CD4-positive, alpha-beta memory T cell (primary cell): ENCODE measurements at regions of chr1 and their contacts with region 1.

Region 1: DNA sequence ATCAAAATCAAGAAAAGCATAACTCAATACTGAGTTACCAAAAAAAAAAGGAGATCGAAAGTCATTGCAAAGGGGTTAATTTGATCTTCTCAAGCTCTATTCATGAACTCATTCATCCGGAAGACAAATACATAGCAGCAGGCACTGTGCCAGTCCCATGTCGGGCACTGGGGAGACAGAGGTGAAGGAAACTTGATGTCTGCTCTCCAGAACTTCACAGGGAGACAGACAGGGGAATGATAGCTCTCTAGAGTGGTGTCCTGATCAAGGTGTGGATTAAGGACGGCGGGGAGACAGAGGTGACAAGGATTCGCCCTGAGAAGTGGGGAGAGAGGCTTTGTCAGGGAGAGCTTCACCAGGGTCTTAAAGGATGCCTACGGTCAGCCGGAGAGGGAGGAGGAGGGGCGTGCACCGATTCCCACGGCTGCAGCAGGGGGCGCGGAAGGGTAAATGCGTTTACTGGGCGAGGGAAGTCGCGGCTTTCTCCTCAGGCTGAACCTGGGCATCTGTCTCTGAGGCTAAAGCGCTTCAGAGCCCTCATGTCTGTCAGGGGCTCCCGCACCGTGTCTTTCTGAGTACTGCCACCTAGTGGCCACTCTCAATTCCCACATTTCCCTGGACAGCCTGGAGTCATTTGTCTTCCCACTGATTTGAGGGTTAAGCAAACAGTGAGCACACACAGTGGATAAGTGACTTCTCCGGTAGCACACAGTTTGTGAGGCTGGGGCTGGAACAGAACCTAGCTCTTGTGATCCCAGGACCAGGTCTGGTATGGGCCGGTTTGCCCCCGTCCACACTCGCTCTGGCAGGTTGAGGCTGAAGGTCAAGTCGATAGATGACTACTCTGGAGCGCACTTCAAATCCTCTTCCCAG is 152.8 kb downstream of the TENT5C start:
- DNase-seq: peak; percentile 57 to 65 (median 63)
- H3K4me3 ChIP-seq: peak overlapping the region; percentile 3 to 42
- H3K4me3 Mint-ChIP-seq: peak overlapping the region; percentile 74 to 94 (median 87)
- H3K27ac ChIP-seq: no peak overlapping the region
- H3K27ac Mint-ChIP-seq: peak overlapping the region in 5 of 7 donors; percentile 5 to 85 (median 45)
- H3K4me1 ChIP-seq: peaks cover 8% of the 10 kb centered on the region
- H3K4me1 Mint-ChIP-seq: peaks cover 4 to 10% (median 7%) of the 10 kb centered on the region in 4 donors
- H3K27me3 ChIP-seq: peaks cover 5% of the 10 kb centered on the region
- H3K27me3 Mint-ChIP-seq: peaks cover 8 to 10% of the 10 kb centered on the region in 2 donors

Region 2: GRCh38 chr1:117312225-117313138 is 446.2 kb before region 1 on chr1:
- CTCF ChIA-PET with region 1: interaction called, 5 read pairs
- POLR2A ChIA-PET with region 1: no interaction called
- intact Hi-C with region 1: loop called (anchors 1 kb)
- DNase-seq: peak in 4 of 5 donors; percentile 23 to 38 (median 25)
- H3K4me3 ChIP-seq: no peak overlapping the region
- H3K4me3 Mint-ChIP-seq: no peak overlapping the region
- H3K27ac ChIP-seq: no peak overlapping the region
- H3K27ac Mint-ChIP-seq: no peak overlapping the region
- H3K4me1 ChIP-seq: no peaks in the 10 kb centered on the region
- H3K4me1 Mint-ChIP-seq: peaks cover 0 to 2% (median under 1%) of the 10 kb centered on the region in 4 donors
- H3K27me3 ChIP-seq: no peaks in the 10 kb centered on the region
- H3K27me3 Mint-ChIP-seq: peaks cover 0 to 4% of the 10 kb centered on the region in 2 donors

Region 3: GRCh38 chr1:117512743-117513321 is 245.8 kb before region 1 on chr1:
- CTCF ChIA-PET with region 1: interaction called, 179 read pairs
- POLR2A ChIA-PET with region 1: no interaction called
- intact Hi-C with region 1: loop called (anchors 1 kb)
- DNase-seq: peak in 4 of 5 donors; percentile 23 to 35 (median 28)
- H3K4me3 ChIP-seq: no peak overlapping the region
- H3K4me3 Mint-ChIP-seq: no peak overlapping the region
- H3K27ac ChIP-seq: no peak overlapping the region
- H3K27ac Mint-ChIP-seq: no peak overlapping the region
- H3K4me1 ChIP-seq: no peaks in the 10 kb centered on the region
- H3K4me1 Mint-ChIP-seq: peaks cover 0 to 1% (median 0%) of the 10 kb centered on the region in 4 donors
- H3K27me3 ChIP-seq: no peaks in the 10 kb centered on the region
- H3K27me3 Mint-ChIP-seq: no peaks in the 10 kb centered on the region

Region 4: GRCh38 chr1:117605774-117606648 is 152.7 kb before region 1 on chr1 and contains the start of gene TENT5C:
- CTCF ChIA-PET with region 1: interaction called, 31 read pairs
- POLR2A ChIA-PET with region 1: interaction called, 5 read pairs
- intact Hi-C with region 1: loop called (anchors 2 kb)
- DNase-seq: peak; percentile 99 to 100 (median 99)
- H3K4me3 ChIP-seq: peak within 1 kb of the TSS; percentile 93 to 98
- H3K4me3 Mint-ChIP-seq: peak within 1 kb of the TSS; percentile 91 to 100 (median 98)
- H3K27ac ChIP-seq: peak within 1 kb of the TSS; percentile 92
- H3K27ac Mint-ChIP-seq: peak within 1 kb of the TSS; percentile 94 to 100 (median 99)
- H3K4me1 ChIP-seq: peaks cover 43% of the 10 kb centered on the region
- H3K4me1 Mint-ChIP-seq: peaks cover 28 to 59% (median 37%) of the 10 kb centered on the region in 4 donors
- H3K27me3 ChIP-seq: no peaks in the 10 kb centered on the region
- H3K27me3 Mint-ChIP-seq: no peaks in the 10 kb centered on the region
- total RNA-seq, gene TENT5C: 13.9 to 14.8 TPM

Region 5: DNA sequence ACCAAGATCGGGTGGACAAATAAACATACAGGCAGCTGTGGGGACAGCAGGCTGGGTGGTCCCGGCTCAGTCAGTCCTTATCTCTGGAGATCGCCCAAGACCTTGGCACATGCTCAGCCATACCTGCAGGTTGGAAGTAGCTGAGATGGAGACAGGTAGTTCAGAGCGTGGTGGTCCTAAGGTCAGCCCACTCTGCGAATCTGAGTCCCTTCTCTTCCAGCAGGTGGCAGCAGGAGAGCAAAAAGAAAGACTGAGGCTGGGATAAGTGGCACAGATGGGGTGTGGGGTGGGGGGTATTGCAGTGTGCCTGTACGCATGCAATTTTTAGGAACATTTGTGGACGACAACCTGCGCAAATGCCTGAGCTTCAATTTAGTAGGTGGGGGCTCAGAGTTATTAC is 48.0 kb before region 1 on chr1:
- CTCF ChIA-PET with region 1: interaction called, 53 read pairs
- POLR2A ChIA-PET with region 1: no interaction called
- intact Hi-C with region 1: no loop called
- DNase-seq: no peak
- H3K4me3 ChIP-seq: no peak overlapping the region
- H3K4me3 Mint-ChIP-seq: no peak overlapping the region
- H3K27ac ChIP-seq: no peak overlapping the region
- H3K27ac Mint-ChIP-seq: no peak overlapping the region
- H3K4me1 ChIP-seq: no peaks in the 10 kb centered on the region
- H3K4me1 Mint-ChIP-seq: no peaks in the 10 kb centered on the region
- H3K27me3 ChIP-seq: no peaks in the 10 kb centered on the region
- H3K27me3 Mint-ChIP-seq: peaks cover 3 to 21% of the 10 kb centered on the region in 2 donors

Region 6: DNA sequence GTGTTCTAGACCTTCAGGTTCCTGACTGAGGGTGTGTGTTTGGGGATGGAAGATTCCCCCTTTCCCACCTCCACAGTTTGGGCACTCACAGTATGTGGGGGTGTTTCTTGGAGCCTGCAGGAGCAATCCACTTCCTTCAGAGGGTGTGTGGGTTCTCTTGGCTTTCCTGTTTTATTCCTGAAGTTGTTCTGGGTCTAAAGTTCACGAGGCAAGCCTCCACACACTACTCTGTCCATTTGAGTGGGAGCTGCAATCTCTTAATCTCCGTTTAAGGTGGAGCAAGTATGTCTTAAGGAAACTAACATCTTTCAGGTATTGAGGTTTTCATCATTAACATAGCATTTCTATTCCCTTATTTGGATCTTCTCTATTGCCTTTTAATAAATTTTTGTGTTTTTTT is 11.1 kb before region 1 on chr1:
- CTCF ChIA-PET with region 1: interaction called, 64 read pairs
- POLR2A ChIA-PET with region 1: no interaction called
- intact Hi-C with region 1: no loop called
- DNase-seq: no peak
- H3K4me3 ChIP-seq: no peak overlapping the region
- H3K4me3 Mint-ChIP-seq: no peak overlapping the region
- H3K27ac ChIP-seq: no peak overlapping the region
- H3K27ac Mint-ChIP-seq: no peak overlapping the region
- H3K4me1 ChIP-seq: no peaks in the 10 kb centered on the region
- H3K4me1 Mint-ChIP-seq: no peaks in the 10 kb centered on the region
- H3K27me3 ChIP-seq: no peaks in the 10 kb centered on the region
- H3K27me3 Mint-ChIP-seq: peaks cover 20 to 21% of the 10 kb centered on the region in 2 donors